Mammary epithelial cell (primary cell): ENCODE measurements at regions of chr2 and their contacts with region 1.

Region 1: DNA sequence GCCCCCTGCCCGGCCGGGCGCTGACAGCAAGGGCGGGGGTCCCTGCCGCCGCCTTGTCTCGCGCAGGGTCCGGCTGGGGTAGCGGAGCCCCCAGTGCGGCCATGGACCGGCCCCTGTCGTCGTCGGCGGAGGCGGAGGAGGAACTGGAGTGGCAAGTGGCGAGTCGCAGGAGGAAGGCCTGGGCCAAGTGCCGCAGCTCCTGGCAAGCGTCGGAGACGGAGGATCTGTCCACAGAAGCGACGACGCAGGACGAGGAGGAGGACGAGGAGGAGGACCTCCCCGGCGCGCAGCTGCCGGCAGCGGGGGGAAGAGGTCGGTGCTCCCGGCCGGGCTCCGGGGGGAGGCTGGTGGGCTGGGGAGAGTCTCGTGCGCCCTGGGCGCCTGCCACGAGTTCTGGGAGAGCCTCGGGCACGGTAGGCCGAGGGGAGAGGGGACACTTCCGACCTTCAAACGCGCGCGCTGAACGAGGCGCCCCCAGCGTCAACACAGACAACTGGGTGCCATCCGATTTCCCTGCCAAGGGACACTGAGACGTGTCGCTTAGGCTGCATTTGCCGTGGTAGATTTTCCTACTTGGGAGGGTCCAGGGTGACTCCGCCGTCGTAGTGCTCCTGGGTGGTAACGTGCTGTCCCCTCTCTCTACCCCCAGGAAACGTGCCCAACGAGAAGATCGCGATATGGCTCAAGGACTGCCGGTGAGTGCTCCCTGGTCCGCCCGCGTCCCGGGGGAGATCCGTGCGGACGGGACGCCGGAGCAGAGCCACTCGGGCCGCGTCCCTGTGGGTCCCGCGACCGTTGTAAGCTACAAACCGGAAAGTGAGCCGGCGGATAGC is 652 bp downstream of the ITPRID2 start:
- DNase-seq: peak; percentile 82
- H3K4me3 ChIP-seq: peak overlapping the region; percentile 83 to 95 (median 87)
- H3K27ac ChIP-seq: peak overlapping the region; percentile 85
- H3K4me1 ChIP-seq: peaks cover 16% of the 10 kb centered on the region
- H3K27me3 ChIP-seq: no peaks in the 10 kb centered on the region
- CTCF ChIP-seq: peak in 1 of 2 donors; percentile 30

Region 2: DNA sequence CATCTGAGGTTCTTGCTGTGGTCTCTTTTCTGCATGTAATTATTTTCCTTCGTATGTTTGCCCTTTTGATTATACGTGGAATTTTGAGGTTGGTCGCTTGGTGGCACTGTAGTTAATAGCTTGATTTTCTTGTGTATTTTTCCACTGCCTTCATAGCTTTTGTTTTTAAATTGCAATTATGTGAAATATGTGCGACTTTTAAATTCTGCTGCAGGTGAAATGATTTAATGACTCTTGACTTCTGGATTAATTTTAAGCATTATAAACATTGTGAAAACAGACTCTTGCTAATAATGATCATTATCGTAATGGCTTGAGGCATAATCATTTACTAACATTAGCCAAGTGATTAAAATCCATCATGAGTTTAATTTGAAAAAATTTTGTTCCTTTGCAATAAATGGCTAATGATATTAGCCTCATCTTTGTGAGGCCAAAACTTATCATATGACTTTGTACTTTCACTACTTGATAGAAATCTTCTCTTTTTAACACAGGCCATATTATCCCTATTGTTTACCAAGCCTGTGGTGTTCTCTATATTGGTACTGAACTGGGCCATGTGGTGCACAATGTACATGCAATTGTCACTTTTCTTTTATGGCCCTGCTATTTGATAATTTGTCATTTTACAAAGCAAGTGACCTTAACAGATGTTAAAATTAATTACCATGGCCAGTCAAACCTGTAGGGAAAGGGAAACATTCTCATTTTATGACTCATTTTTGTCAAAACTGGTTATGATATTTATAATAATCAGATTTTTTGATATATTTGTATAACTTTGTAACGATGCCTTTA is 149.1 kb before region 1 on chr2:
- CTCF ChIA-PET with region 1: interaction called, 3 read pairs
- dilution Hi-C with region 1: no loop called
- in situ Hi-C with region 1: no loop called
- intact Hi-C with region 1: loop called (anchors 1 kb)
- DNase-seq: peak; percentile 55
- H3K4me3 ChIP-seq: no peak overlapping the region
- H3K27ac ChIP-seq: no peak overlapping the region
- H3K4me1 ChIP-seq: peaks cover 12% of the 10 kb centered on the region
- H3K27me3 ChIP-seq: no peaks in the 10 kb centered on the region
- CTCF ChIP-seq: peak; percentile 56 to 58

Region 3: DNA sequence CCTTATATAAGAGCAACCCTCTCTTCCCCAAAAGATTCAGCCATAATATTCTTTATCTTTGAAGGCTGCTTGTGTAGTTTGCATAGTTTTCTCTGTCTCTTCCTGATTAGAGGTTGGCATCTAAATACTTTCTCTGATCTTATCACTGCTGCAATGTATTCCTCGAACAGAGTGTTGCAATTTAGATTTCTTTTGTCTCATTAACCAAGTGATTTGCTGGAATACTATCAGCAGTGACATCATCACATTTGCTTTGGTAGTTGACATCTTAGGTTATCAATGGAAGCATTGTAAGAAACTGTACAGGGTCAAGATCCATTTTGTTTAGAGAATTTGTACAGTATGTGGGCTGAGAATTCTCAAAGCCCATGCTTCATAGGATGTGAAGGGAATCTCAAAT is 139.9 kb before region 1 on chr2:
- CTCF ChIA-PET with region 1: no interaction called
- dilution Hi-C with region 1: no loop called
- in situ Hi-C with region 1: loop called in 1 of 2 experiments (anchors 10 kb)
- intact Hi-C with region 1: no loop called
- DNase-seq: no peak
- H3K4me3 ChIP-seq: no peak overlapping the region
- H3K27ac ChIP-seq: no peak overlapping the region
- H3K4me1 ChIP-seq: peaks cover 5% of the 10 kb centered on the region
- H3K27me3 ChIP-seq: no peaks in the 10 kb centered on the region
- CTCF ChIP-seq: no peak

Region 4: GRCh38 chr2:181774685-181775084 is 117.5 kb before region 1 on chr2:
- CTCF ChIA-PET with region 1: no interaction called
- dilution Hi-C with region 1: no loop called
- in situ Hi-C with region 1: no loop called
- intact Hi-C with region 1: loop called (anchors 5 kb)
- DNase-seq: peak; percentile 72
- H3K4me3 ChIP-seq: no peak overlapping the region
- H3K27ac ChIP-seq: peak overlapping the region; percentile 34
- H3K4me1 ChIP-seq: peaks cover 43% of the 10 kb centered on the region
- H3K27me3 ChIP-seq: no peaks in the 10 kb centered on the region
- CTCF ChIP-seq: no peak

Region 5: GRCh38 chr2:181859123-181859522 is 33.1 kb before region 1 on chr2:
- CTCF ChIA-PET with region 1: interaction called, 3 read pairs
- dilution Hi-C with region 1: no loop called
- in situ Hi-C with region 1: no loop called
- intact Hi-C with region 1: loop called (anchors 2 kb)
- DNase-seq: no peak
- H3K4me3 ChIP-seq: no peak overlapping the region
- H3K27ac ChIP-seq: no peak overlapping the region
- H3K4me1 ChIP-seq: peaks cover 4% of the 10 kb centered on the region
- H3K27me3 ChIP-seq: no peaks in the 10 kb centered on the region
- CTCF ChIP-seq: no peak

Region 6: GRCh38 chr2:182836451-182836850 is 944.3 kb after region 1 on chr2:
- CTCF ChIA-PET with region 1: no interaction called
- dilution Hi-C with region 1: no loop called
- in situ Hi-C with region 1: no loop called
- intact Hi-C with region 1: no loop called
- DNase-seq: no peak
- H3K4me3 ChIP-seq: no peak overlapping the region
- H3K27ac ChIP-seq: no peak overlapping the region
- H3K4me1 ChIP-seq: peaks cover 3% of the 10 kb centered on the region
- H3K27me3 ChIP-seq: peaks cover 7% of the 10 kb centered on the region
- CTCF ChIP-seq: no peak